ENCODE measurements at regions of chr19 and their contacts with region 1.

Region 1: GRCh38 chr19:10106100-10106936 is at the start of gene PPAN:
- DNase-seq: peak; percentile 94
- ATAC-seq: peak; percentile 94
- H3K4me3 ChIP-seq: peak within 1 kb of the TSS; percentile 72 to 99
- H3K27ac ChIP-seq: peak within 1 kb of the TSS; percentile 89
- H3K4me1 ChIP-seq: peaks cover 12 to 35% of the 10 kb centered on the region in 2 experiments
- H3K27me3 ChIP-seq: no peaks in the 10 kb centered on the region
- CTCF ChIP-seq: no peak
- POLR2A ChIP-seq: no peak
- RAD21 ChIP-seq: no peak
- total RNA-seq, gene PPAN: 101 TPM

Region 2: GRCh38 chr19:10036601-10037071 is 69.7 kb before region 1 on chr19:
- CTCF ChIA-PET with region 1: no interaction called
- POLR2A ChIA-PET with region 1: no interaction called
- RAD21 ChIA-PET with region 1: no interaction called
- intact Hi-C with region 1: no loop called
- DNase-seq: no peak
- ATAC-seq: no peak
- H3K4me3 ChIP-seq: no peak overlapping the region
- H3K27ac ChIP-seq: no peak overlapping the region
- H3K4me1 ChIP-seq: peaks cover 0 to 5% of the 10 kb centered on the region in 2 experiments; a peak in 1 of 4 replicates
- H3K27me3 ChIP-seq: peaks cover 29% of the 10 kb centered on the region; the same call in 1 of the 2 replicates
- CTCF ChIP-seq: no peak
- POLR2A ChIP-seq: no peak
- RAD21 ChIP-seq: no peak

Region 3: GRCh38 chr19:10095948-10096621 is 10.2 kb before region 1 on chr19:
- CTCF ChIA-PET with region 1: interaction called, 9 read pairs
- POLR2A ChIA-PET with region 1: interaction called, 14 read pairs
- RAD21 ChIA-PET with region 1: no interaction called
- intact Hi-C with region 1: no loop called
- DNase-seq: peak; percentile 75
- ATAC-seq: peak; percentile 89
- H3K4me3 ChIP-seq: no peak overlapping the region
- H3K27ac ChIP-seq: peak overlapping the region; percentile 44; the same call in 1 of the 2 replicates
- H3K4me1 ChIP-seq: peaks cover 11 to 16% of the 10 kb centered on the region in 2 experiments
- H3K27me3 ChIP-seq: no peaks in the 10 kb centered on the region
- CTCF ChIP-seq: no peak
- POLR2A ChIP-seq: peak; percentile 66
- RAD21 ChIP-seq: no peak

Measured in HCT116 (cell line).